Ascending aorta (tissue), 2 donors: ENCODE measurements at regions of chr3 and their contacts with region 1.

Region 1: DNA sequence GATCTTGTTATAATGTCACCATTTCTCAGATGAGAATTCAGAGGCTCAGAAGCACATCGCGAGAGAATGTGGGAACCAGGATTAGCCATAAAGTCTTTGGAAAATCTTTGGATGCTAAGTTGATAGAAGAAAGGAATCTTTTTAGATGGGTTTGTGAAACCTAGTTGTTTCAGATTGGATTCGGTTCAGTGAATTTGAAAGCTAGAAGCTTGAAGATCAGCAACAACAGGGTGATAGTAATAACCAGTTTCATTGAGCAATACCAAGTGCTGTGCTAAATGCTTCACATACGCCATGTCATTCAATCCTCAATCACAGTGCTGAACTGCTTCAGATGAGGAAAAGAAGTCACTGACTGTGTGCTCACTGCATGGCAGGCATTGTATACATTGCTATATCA is 47.4 kb upstream of the MITF start:
- DNase-seq: no peak
- H3K4me3 ChIP-seq: no peak overlapping the region
- H3K27ac ChIP-seq: no peak overlapping the region
- H3K4me1 ChIP-seq: no peaks in the 10 kb centered on the region
- H3K27me3 ChIP-seq: no peaks in the 10 kb centered on the region
- CTCF ChIP-seq: no peak

Region 2: GRCh38 chr3:69406163-69406562 is 285.7 kb before region 1 on chr3:
- intact Hi-C with region 1: no loop called
- DNase-seq: no peak
- H3K4me3 ChIP-seq: no peak overlapping the region
- H3K27ac ChIP-seq: no peak overlapping the region
- H3K4me1 ChIP-seq: peaks cover 0 to 7% of the 10 kb centered on the region in 2 donors
- H3K27me3 ChIP-seq: no peaks in the 10 kb centered on the region
- CTCF ChIP-seq: no peak

Region 3: DNA sequence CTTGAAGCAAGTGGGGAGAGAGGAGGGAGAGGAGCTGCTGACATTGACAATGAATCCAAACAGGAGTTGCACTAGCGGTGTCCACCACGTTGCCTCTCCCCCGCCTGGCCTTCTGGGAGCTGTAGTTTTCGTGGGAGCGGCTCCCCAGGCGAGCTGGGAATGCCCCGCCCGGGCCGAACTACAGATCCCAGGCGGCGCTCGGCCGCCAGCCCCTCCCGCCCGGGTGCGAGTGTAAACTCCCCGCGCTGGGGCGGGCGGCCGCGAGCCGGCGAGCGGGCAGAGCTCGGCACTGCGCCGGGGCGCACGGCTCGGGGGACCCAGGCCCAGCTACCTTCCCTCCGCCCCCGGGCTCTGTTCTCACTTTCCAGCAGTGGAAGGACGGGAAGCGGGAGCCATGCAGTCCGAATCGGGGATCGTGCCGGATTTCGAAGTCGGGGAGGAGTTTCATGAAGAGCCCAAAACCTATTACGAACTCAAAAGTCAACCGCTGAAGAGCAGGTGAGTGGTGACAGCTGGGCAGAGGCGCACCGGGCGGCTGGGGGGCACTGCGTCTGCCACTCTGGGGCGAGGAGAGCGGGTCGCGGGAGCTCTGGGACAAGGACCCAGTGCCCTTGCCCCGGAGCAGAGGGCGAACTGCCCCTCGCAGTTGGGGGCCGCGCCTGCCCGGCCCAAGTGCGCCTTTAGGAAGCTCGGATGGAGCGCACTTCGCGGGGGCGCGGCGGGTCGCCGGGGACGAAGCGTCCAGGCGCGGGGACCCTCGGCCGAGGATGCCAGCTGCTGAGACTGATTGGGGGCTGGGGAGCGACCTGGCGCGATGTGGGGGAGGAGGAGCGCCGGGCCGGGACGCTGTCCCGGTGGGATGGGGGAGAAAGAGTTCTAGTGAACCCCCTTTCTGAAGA is 47.6 kb after region 1 on chr3 and contains the start of gene MITF:
- intact Hi-C with region 1: loop called (anchors 5 kb)
- DNase-seq: peak; percentile 76 to 96
- H3K4me3 ChIP-seq: peak within 1 kb of the TSS; percentile 92 to 100
- H3K27ac ChIP-seq: peak within 1 kb of the TSS; percentile 78 to 83
- H3K4me1 ChIP-seq: peaks cover 2 to 11% of the 10 kb centered on the region in 2 donors
- H3K27me3 ChIP-seq: no peaks in the 10 kb centered on the region
- CTCF ChIP-seq: no peak
- total RNA-seq, gene MITF: 27.4 TPM

Region 4: GRCh38 chr3:69791919-69792399 is 100.1 kb after region 1 on chr3:
- intact Hi-C with region 1: loop called (anchors 1 kb)
- DNase-seq: no peak
- H3K4me3 ChIP-seq: no peak overlapping the region
- H3K27ac ChIP-seq: no peak overlapping the region
- H3K4me1 ChIP-seq: peaks cover 7 to 21% of the 10 kb centered on the region in 2 donors
- H3K27me3 ChIP-seq: no peaks in the 10 kb centered on the region
- CTCF ChIP-seq: peak; percentile 36 to 63 (median 53)

Region 5: GRCh38 chr3:69855436-69856162 is 163.7 kb after region 1 on chr3:
- intact Hi-C with region 1: loop called (anchors 1 kb)
- DNase-seq: no peak
- H3K4me3 ChIP-seq: no peak overlapping the region
- H3K27ac ChIP-seq: peak overlapping the region in 1 of 2 donors; percentile 23
- H3K4me1 ChIP-seq: peaks cover 0 to 18% of the 10 kb centered on the region in 2 donors
- H3K27me3 ChIP-seq: no peaks in the 10 kb centered on the region
- CTCF ChIP-seq: peak; percentile 17 to 56 (median 24)

Region 6: DNA sequence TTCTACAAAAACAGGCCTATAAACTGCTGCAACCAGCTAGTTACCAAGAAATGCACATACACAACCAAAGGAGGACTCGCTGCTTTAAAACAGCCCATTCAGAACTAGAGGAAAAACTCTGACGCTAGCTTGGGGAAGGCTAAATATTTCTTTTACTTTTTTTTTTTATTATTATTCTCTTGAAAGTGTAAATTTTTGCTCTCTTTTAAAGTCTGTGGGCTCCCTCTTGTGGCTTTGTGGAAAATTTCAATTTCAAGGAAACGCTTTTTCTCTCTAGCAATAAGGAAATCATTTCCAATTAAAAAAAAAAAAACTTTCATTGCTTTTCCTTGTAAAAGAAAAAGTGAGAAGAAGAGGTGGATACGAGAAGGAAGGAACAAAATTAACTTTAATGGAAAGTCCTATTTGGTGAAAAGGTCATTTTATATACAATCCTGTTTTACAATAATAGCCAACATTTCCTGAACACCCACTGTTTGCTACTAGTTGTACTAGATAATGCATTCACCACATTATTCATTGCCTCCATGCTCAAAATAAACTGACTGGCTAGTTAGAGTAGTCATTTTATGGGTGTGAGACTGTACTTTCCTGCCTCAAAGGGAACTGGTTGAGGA is 256.5 kb after region 1 on chr3:
- intact Hi-C with region 1: loop called (anchors 1 kb)
- DNase-seq: no peak
- H3K4me3 ChIP-seq: no peak overlapping the region
- H3K27ac ChIP-seq: peak overlapping the region; percentile 24 to 32
- H3K4me1 ChIP-seq: peaks cover 0 to 4% of the 10 kb centered on the region in 2 donors
- H3K27me3 ChIP-seq: no peaks in the 10 kb centered on the region
- CTCF ChIP-seq: peak; percentile 38 to 79 (median 66)